Activated CD8-positive, alpha-beta T cell treated with anti-CD3 and anti-CD28 coated beads for 36 hours (primary cell): ENCODE measurements at regions of chr7 and their contacts with region 1.

Region 1: GRCh38 chr7:43439631-43440401 is 143.1 kb upstream of the STK17A start:
- DNase-seq: peak; percentile 66
- ATAC-seq: peak; percentile 78
- H3K4me3 Mint-ChIP-seq: no peak overlapping the region
- H3K27ac Mint-ChIP-seq: no peak overlapping the region
- H3K4me1 Mint-ChIP-seq: peaks cover 3% of the 10 kb centered on the region
- H3K27me3 Mint-ChIP-seq: peaks cover 2% of the 10 kb centered on the region
- CTCF ChIP-seq: peak; percentile 86

Region 2: DNA sequence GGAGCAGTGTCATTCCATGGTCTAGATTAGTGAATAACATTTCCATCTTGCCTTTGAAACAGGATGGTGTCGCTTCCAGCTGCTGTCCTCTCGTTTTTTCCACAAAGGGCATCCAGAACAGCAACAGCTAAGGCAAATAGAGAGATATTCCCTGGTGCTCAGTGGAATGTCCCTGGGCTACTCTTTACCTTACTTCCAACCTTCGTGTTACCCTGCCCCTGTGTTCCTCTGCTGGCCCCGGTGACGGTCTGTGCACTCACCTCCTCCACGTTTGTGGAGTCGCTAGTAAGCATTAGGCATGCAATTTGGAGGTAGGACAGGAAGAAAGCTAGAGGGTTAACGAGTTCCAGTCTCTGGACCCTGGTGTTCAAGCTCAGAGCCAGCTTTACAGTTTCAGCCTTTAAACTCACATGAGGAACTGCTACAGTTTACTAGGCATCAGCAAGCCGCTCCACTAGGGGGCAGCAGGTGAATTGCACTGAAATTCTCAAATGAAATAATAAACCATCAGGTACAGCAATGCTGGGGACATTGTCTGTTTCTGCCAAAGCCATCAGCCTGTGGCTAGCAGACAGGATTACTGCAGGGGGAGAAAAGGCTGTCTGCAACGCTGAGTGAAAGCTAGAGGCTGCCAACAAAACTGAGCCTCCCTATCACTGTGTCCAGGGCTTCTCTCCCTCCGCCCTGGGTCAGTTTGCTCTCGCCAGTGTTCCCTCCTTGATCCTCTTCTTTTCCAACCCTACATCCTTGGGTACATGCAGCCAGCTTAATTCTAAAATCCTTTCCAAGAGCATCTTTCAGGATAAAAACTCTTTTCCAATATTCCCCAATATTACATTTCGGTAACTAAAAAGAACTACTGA is 498.6 kb before region 1 on chr7:
- CTCF ChIA-PET with region 1: interaction called, 10 read pairs
- POLR2A ChIA-PET with region 1: no interaction called
- intact Hi-C with region 1: no loop called
- DNase-seq: peak; percentile 93
- ATAC-seq: peak; percentile 61
- H3K4me3 Mint-ChIP-seq: no peak overlapping the region
- H3K27ac Mint-ChIP-seq: no peak overlapping the region
- H3K4me1 Mint-ChIP-seq: peaks cover 33% of the 10 kb centered on the region
- H3K27me3 Mint-ChIP-seq: no peaks in the 10 kb centered on the region
- CTCF ChIP-seq: peak; percentile 86

Region 3: DNA sequence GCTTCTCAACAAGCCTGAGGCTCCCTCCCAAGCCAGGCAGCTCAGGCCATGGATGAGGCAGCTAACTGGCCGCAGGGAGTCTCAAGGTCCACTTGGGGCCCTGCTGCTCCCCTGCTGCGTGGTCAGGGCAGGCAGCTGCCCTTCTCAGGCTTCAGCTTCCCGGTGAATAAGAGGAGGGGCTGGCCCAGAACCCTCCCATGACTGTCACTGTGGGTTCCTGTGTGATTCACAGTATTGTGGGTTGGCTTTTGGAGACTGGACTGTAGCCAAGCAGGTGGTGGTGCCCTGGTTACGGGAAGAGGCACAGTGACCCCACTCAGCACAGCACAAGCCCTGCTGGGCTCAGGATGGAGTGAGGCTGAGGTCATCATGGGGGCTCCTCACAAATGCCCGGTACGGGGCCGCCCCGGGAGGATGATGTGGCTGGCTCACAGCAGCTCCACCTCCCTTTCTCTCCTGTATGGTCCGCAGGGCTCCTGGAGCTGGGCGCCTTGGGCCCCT is 137.6 kb before region 1 on chr7:
- CTCF ChIA-PET with region 1: no interaction called
- POLR2A ChIA-PET with region 1: no interaction called
- intact Hi-C with region 1: loop called (anchors 5 kb)
- DNase-seq: peak; percentile 68
- ATAC-seq: peak; percentile 81
- H3K4me3 Mint-ChIP-seq: no peak overlapping the region
- H3K27ac Mint-ChIP-seq: no peak overlapping the region
- H3K4me1 Mint-ChIP-seq: peaks cover 32% of the 10 kb centered on the region
- H3K27me3 Mint-ChIP-seq: peaks cover 16% of the 10 kb centered on the region
- CTCF ChIP-seq: no peak

Region 4: DNA sequence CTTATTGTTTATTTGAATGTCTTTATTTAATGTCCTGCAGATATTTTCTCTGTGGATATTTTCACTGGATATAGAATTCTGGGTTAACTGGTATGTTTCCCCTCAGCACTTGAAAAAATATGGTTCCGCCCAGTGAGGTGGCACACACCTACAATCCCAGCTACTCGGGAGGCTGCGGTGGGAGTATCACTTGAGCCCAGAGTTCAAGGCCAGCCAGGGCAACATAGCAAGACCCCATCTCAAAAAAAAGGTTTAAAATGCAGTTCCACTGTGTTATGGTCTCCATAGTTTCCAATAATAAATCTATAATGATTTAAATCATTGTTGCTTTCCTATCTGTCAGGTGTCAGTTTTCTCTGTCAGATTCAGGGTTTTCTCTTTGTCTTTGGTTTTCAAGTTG is 22.4 kb before region 1 on chr7:
- CTCF ChIA-PET with region 1: interaction called, 10 read pairs
- POLR2A ChIA-PET with region 1: no interaction called
- intact Hi-C with region 1: no loop called
- DNase-seq: no peak
- ATAC-seq: no peak
- H3K4me3 Mint-ChIP-seq: no peak overlapping the region
- H3K27ac Mint-ChIP-seq: no peak overlapping the region
- H3K4me1 Mint-ChIP-seq: no peaks in the 10 kb centered on the region
- H3K27me3 Mint-ChIP-seq: peaks cover 16% of the 10 kb centered on the region
- CTCF ChIP-seq: no peak

Region 5: GRCh38 chr7:43454936-43455518 is 15.2 kb after region 1 on chr7:
- CTCF ChIA-PET with region 1: interaction called, 31 read pairs
- POLR2A ChIA-PET with region 1: no interaction called
- intact Hi-C with region 1: no loop called
- DNase-seq: no peak
- ATAC-seq: no peak
- H3K4me3 Mint-ChIP-seq: no peak overlapping the region
- H3K27ac Mint-ChIP-seq: no peak overlapping the region
- H3K4me1 Mint-ChIP-seq: no peaks in the 10 kb centered on the region
- H3K27me3 Mint-ChIP-seq: no peaks in the 10 kb centered on the region
- CTCF ChIP-seq: peak; percentile 68

Region 6: GRCh38 chr7:43484678-43485395 is 45.0 kb after region 1 on chr7:
- CTCF ChIA-PET with region 1: no interaction called
- POLR2A ChIA-PET with region 1: no interaction called
- intact Hi-C with region 1: no loop called
- DNase-seq: no peak
- ATAC-seq: no peak
- H3K4me3 Mint-ChIP-seq: no peak overlapping the region
- H3K27ac Mint-ChIP-seq: no peak overlapping the region
- H3K4me1 Mint-ChIP-seq: peaks cover 4% of the 10 kb centered on the region
- H3K27me3 Mint-ChIP-seq: no peaks in the 10 kb centered on the region
- CTCF ChIP-seq: no peak

Region 7: GRCh38 chr7:43535810-43536585 is 96.2 kb after region 1 on chr7:
- CTCF ChIA-PET with region 1: no interaction called
- POLR2A ChIA-PET with region 1: no interaction called
- intact Hi-C with region 1: no loop called
- DNase-seq: no peak
- ATAC-seq: no peak
- H3K4me3 Mint-ChIP-seq: no peak overlapping the region
- H3K27ac Mint-ChIP-seq: no peak overlapping the region
- H3K4me1 Mint-ChIP-seq: no peaks in the 10 kb centered on the region
- H3K27me3 Mint-ChIP-seq: peaks cover 3% of the 10 kb centered on the region
- CTCF ChIP-seq: no peak